Endothelial cell of umbilical vein (primary cell): ENCODE measurements at regions of chr14 and their contacts with region 1.

Region 1: DNA sequence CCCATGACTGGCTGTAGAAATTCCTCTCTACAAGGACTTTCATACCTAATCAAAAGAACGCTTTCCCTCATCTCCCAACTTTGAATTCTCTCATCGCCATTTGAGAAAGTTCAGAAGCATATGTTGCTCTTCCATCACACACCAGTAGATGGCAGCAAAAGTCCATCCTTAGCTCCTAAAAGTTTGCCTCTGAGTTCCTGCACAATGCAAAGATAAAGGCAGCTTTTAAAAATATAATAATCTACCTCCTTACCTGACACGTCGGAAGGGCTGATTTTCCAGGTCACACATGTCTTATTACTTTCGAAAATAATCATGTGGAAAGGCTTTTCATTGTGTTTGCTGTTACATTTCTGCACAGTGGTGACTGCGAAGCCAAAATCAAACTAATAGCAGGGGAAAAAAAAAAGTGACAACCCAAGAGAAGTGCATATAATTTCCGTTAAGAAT is 456.7 kb upstream of the SEL1L start:
- DNase-seq: peak; percentile 46
- H3K4me3 ChIP-seq: no peak overlapping the region
- H3K27ac ChIP-seq: no peak overlapping the region
- H3K4me1 ChIP-seq: no peaks in the 10 kb centered on the region
- H3K27me3 ChIP-seq: no peaks in the 10 kb centered on the region
- CTCF ChIP-seq: peak; percentile 49 to 69
- POLR2A ChIP-seq: no peak

Region 2: DNA sequence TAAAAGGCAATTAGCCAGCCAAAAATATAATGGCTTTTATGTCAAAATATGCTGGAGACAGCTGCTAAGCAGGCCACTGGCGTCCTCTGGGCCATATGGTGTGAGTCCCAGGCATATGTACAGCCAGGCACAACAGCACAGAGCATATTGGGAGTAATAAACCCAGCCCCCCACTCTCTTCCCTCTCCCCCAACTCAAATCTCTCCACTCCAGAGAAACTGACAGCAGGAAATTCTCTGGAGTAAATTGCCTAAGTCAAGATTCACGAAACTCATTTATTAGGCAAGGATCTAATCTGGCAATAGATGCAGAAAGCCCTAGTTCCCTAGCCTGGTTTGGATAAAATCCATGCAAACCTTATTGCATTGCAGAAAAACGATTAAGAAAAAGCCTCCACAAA is 308.8 kb before region 1 on chr14:
- CTCF ChIA-PET with region 1: no interaction called
- POLR2A ChIA-PET with region 1: no interaction called
- dilution Hi-C with region 1: no loop called
- intact Hi-C with region 1: no loop called
- DNase-seq: no peak
- H3K4me3 ChIP-seq: no peak overlapping the region
- H3K27ac ChIP-seq: no peak overlapping the region
- H3K4me1 ChIP-seq: no peaks in the 10 kb centered on the region
- H3K27me3 ChIP-seq: no peaks in the 10 kb centered on the region
- CTCF ChIP-seq: no peak
- POLR2A ChIP-seq: no peak

Region 3: GRCh38 chr14:82126006-82126405 is 135.7 kb after region 1 on chr14:
- CTCF ChIA-PET with region 1: no interaction called
- POLR2A ChIA-PET with region 1: no interaction called
- dilution Hi-C with region 1: no loop called
- intact Hi-C with region 1: no loop called
- DNase-seq: no peak
- H3K4me3 ChIP-seq: no peak overlapping the region
- H3K27ac ChIP-seq: no peak overlapping the region
- H3K4me1 ChIP-seq: no peaks in the 10 kb centered on the region
- H3K27me3 ChIP-seq: no peaks in the 10 kb centered on the region
- CTCF ChIP-seq: no peak
- POLR2A ChIP-seq: no peak

Region 4: DNA sequence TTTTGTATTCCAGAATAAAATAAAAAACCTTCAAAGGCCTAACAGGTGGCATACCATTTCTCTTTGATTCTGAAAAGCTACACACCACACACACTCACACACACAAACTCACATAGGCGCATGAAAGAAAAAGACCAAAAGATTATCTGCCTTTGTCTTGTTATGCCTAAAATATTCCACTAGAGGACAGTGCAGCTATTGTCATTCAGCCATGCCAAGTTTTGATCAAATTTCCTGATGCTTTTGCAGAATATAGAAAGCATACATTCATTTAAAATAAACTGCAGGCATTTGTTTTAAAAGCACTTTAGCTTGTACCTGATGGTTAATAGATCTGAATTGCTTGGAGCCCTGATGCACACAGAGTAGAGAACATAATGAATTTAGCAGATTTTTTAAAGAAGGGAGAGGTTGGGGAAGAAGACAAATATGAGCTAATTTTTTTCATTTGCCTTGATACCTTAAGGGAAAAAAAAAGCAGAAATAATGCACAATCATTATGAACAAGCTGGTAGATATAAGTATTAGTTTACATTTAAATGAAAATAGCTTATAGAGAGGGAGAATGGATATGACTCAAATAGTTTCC is 1310.2 kb after region 1 on chr14:
- CTCF ChIA-PET with region 1: no interaction called
- POLR2A ChIA-PET with region 1: no interaction called
- dilution Hi-C with region 1: no loop called
- intact Hi-C with region 1: loop called (anchors 10 kb)
- DNase-seq: peak; percentile 49
- H3K4me3 ChIP-seq: no peak overlapping the region
- H3K27ac ChIP-seq: no peak overlapping the region
- H3K4me1 ChIP-seq: no peaks in the 10 kb centered on the region
- H3K27me3 ChIP-seq: no peaks in the 10 kb centered on the region
- CTCF ChIP-seq: peak; percentile 62 to 68
- POLR2A ChIP-seq: no peak